Caco-2 (cell line): ENCODE measurements at regions of chr4 and their contacts with region 1.

Region 1: GRCh38 chr4:160811956-160812355 is 1351.8 kb downstream of the FSTL5 start:
- DNase-seq: no peak
- H3K4me3 ChIP-seq: no peak overlapping the region
- H3K4me3 Mint-ChIP-seq: no peak overlapping the region
- H3K27ac Mint-ChIP-seq: no peak overlapping the region
- H3K4me1 ChIP-seq: no peaks in the 10 kb centered on the region
- H3K4me1 Mint-ChIP-seq: no peaks in the 10 kb centered on the region
- H3K27me3 ChIP-seq: no peaks in the 10 kb centered on the region
- H3K27me3 Mint-ChIP-seq: no peaks in the 10 kb centered on the region
- CTCF ChIP-seq: no peak

Region 2: GRCh38 chr4:160546201-160546600 is 265.8 kb before region 1 on chr4:
- CTCF ChIA-PET with region 1: no interaction called
- POLR2A ChIA-PET with region 1: no interaction called
- intact Hi-C with region 1: loop called (anchors 5 kb)
- DNase-seq: no peak
- H3K4me3 ChIP-seq: no peak overlapping the region
- H3K4me3 Mint-ChIP-seq: no peak overlapping the region
- H3K27ac Mint-ChIP-seq: no peak overlapping the region
- H3K4me1 ChIP-seq: no peaks in the 10 kb centered on the region
- H3K4me1 Mint-ChIP-seq: no peaks in the 10 kb centered on the region
- H3K27me3 ChIP-seq: no peaks in the 10 kb centered on the region
- H3K27me3 Mint-ChIP-seq: no peaks in the 10 kb centered on the region
- CTCF ChIP-seq: no peak